HEK293 (cell line): ENCODE measurements at regions of chr19 and their contacts with region 1.

Region 1: GRCh38 chr19:2050991-2051772 is at the start of gene MKNK2:
- H3K4me3 ChIP-seq: peak within 1 kb of the TSS; percentile 55
- H3K27ac ChIP-seq: peak within 1 kb of the TSS; percentile 47; the same call in 1 of the 2 replicates
- H3K4me1 ChIP-seq: peaks cover 3% of the 10 kb centered on the region; the same call in 1 of the 2 replicates
- CTCF ChIP-seq: peak; percentile 96

Region 2: DNA sequence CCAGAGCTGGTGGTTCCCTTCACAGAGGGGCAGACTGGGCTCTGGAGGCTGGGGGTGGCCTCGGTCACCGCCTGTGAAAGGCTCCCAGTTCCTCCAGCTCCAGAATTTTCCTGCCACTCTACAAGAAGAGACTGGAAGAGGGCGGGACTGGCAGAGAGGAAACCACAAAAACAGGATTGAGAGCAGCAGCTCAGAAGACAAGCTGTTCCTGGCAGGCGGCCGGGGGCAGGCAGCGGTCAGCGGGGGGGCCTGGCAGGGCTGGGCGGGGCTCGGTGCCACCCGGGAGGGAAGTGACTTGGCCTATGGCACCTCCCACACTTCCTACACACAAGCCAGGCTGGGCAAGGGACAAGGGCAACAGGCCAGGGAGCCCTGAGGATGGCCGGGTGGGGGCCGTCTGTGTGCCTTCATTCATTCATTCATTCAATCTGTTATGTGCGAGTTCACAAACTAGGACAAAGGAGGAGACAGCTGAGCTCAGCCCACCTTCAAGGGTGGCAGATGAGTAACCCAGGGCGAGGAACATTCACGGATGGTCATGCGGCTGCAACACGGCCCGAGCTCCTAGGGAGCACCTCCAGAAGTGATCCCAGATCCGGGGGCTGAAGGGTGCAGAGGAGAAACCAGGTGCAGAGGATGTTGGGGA is 18.8 kb before region 1 on chr19:
- CTCF ChIA-PET with region 1: interaction called, 4 read pairs
- POLR2A ChIA-PET with region 1: interaction called, 17 read pairs
- H3K4me3 ChIP-seq: no peak overlapping the region
- H3K27ac ChIP-seq: no peak overlapping the region; the same call in 1 of the 2 replicates
- H3K4me1 ChIP-seq: peaks cover 2% of the 10 kb centered on the region; the same call in 1 of the 2 replicates
- CTCF ChIP-seq: no peak

Region 3: GRCh38 chr19:2061495-2062381 is 10.6 kb after region 1 on chr19:
- CTCF ChIA-PET with region 1: interaction called, 4 read pairs
- POLR2A ChIA-PET with region 1: interaction called, 11 read pairs
- H3K4me3 ChIP-seq: peak overlapping the region; percentile 57
- H3K27ac ChIP-seq: peak overlapping the region; percentile 92
- H3K4me1 ChIP-seq: peaks cover 16% of the 10 kb centered on the region
- CTCF ChIP-seq: peak; percentile 64